ENCODE measurements at regions of chr13 and their contacts with region 1.

Region 1: GRCh38 chr13:52128714-52129700 is at the start of gene NEK5:
- DNase-seq: peak; percentile 88
- total RNA-seq, gene NEK5: 0.67 TPM

Region 2: GRCh38 chr13:51814825-51815650 is 314.0 kb before region 1 on chr13:
- intact Hi-C with region 1: loop called (anchors 5 kb)
- DNase-seq: peak; percentile 82

Region 3: DNA sequence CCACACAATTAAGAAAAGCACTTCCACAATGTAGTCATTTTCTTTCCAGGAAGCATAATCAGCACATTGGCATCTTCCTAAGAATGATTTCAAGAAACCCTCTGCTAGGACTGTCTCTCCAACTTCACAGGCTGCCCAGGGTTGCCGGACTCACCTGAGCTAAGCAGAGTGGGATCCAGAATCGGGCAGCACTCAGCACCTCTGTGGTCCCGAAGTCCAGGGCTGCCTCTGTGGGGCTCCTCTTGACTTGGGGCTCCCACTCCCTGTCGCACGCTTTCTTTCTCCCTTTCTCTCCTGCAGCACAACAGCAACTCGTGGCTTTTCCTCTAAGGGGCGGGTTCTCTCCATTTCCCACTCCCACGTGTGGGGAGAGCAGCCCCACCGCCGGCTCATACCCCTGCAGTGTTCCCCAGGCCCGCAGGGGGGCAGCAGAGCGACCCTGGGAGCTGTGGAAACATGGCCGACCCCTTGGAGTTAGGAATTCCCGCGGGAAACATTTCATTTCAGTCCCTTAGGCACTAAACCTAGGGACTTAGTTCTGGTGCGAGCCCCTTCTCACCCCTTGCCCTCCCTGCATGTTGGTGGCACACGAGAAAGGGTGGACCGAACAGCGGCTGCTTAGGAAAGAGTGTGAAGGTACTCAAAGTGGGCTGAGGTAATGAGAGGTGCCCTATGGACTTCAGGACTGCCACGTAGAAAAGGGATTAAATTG is 284.0 kb before region 1 on chr13 and contains the start of gene TMEM272:
- intact Hi-C with region 1: loop called (anchors 5 kb)
- DNase-seq: peak; percentile 82
- total RNA-seq, gene TMEM272: 1.7 TPM

Region 4: GRCh38 chr13:51895906-51896888 is 232.8 kb before region 1 on chr13:
- intact Hi-C with region 1: loop called (anchors 2 kb)
- DNase-seq: no peak

Region 5: DNA sequence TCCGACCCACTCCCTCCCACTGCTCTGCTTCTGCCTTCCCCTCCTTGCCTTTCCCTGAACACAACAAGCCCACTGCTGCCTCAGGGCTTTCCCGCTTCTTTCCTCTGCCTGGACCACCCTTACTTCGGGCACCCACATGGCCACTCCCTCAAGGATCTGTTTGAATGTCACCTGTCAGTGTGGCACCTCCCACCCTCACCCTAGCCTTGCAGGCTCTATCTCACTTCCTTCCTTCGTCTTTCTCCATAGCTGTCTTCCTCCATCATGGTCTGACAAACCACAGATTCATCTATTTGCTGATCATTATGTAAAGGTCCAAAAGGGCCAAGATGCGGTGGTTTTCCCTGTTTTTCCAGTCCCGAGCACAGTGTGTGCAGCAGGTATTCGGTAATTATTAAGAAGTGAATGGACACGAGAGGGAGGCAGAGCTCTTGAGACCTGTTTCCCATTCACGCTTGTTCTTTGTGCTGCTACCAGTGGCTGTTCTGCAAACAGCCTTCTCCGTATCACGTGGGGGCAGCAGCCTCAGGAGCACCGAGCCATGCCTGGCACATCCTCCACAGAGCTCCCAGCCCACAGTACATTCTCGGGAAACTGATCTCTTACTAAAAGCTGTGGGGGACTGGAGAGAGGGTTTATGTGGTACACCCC is 217.0 kb before region 1 on chr13:
- intact Hi-C with region 1: loop called (anchors 5 kb)
- DNase-seq: no peak

Region 6: GRCh38 chr13:52001120-52001731 is 127.8 kb before region 1 on chr13:
- intact Hi-C with region 1: loop called (anchors 2 kb)
- DNase-seq: no peak

Region 7: DNA sequence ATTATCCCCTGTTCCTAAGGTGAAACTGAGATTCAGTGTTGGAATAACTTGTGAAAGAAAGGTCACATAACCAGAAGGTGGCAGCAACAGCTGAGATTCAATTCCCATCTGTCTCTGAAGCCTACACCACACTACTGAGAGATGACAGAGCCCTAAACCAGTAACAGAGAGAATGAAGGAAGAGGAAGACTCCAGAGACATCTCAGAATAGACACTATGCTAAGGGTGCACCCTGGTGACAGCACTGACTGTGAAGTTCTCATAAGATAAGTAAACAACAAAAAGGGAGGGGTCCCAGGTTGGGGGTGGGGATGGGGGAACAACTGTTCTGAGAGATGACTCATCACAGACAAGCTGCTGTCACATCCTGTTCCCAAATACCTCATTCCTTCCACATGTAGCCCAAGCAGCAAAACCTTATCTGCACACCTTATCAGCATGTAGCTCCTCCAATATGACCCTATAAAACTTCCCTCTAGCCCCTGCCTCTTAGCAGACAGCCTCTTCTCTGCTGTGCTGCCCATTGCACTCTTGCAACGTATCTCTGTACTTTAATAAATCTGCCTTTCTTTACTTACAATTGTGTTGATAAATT is 58.0 kb before region 1 on chr13:
- intact Hi-C with region 1: loop called (anchors 2 kb)
- DNase-seq: no peak

Measured in cardiac septum (tissue), 1 donor.